Prostate gland (tissue), 2 donors: ENCODE measurements at regions of chr9 and their contacts with region 1.

Region 1: DNA sequence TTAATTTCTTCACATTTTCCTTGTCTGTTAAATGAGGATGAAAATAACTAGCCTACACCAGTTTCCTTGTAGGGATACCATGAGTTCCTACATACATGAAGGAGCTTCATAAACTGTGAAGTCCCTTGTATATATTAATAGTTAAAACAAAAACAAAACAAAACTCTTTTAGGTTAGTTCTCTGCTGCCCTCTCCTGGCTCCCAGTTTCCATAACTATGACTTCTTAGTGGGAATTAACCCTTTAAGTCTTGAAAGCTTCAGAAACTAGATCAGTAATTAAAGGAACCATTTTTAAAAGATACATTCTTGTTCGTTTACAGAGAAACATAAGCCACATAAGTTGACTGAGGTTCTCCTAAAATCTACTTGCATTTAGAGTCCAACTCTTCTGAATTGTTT is 500.0 kb upstream of the C9orf72 start:
- DNase-seq: no peak
- H3K4me3 ChIP-seq: no peak overlapping the region
- H3K27ac ChIP-seq: no peak overlapping the region
- H3K4me1 ChIP-seq: no peaks in the 10 kb centered on the region
- H3K27me3 ChIP-seq: no peaks in the 10 kb centered on the region
- CTCF ChIP-seq: peak in 2 of 4 experiments; percentile 44 to 48
- POLR2A ChIP-seq: no peak

Region 2: DNA sequence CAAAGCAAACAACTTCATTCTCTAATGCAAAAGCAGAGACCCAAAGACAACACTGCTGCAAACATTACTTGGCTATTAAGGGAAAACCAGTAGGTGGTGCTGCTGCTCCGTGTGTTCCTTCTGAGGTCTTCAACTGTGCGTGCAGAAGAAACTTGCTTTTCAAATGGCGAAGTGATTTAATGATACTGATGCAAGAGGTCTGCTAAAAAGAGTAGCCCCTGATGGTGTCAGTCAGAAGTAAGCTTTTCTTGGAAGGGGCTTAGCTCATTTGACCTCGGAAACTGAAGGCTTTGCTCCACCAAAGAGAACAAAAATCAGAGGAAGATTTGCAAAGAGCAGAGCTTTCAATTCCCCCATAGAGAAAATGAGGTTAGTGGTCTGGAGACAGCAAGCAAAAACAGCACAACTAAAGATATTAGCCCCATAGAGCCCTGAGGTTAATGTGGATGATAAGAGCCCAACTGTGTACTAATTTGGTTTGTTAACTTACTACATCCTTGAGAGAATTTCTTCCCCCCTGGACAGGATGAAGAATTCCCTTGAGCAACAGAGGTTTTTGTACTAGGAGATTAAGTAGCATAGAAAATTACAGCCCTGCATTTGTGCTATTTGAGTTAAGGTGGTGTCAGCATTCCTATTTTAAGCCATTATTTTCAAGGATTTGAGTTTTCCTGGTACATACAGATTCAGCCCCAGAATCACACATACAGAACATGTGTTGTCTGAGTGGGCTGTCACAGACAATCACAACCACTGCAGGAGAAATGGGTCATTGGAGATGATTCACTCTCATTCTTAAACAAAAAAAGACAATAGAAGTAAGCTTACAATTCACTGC is 346.8 kb before region 1 on chr9:
- intact Hi-C with region 1: loop called (anchors 5 kb)
- DNase-seq: peak; percentile 42
- H3K4me3 ChIP-seq: no peak overlapping the region
- H3K27ac ChIP-seq: no peak overlapping the region
- H3K4me1 ChIP-seq: no peaks in the 10 kb centered on the region
- H3K27me3 ChIP-seq: no peaks in the 10 kb centered on the region
- CTCF ChIP-seq: peak; percentile 19 to 67 (median 53)
- POLR2A ChIP-seq: no peak

Region 3: DNA sequence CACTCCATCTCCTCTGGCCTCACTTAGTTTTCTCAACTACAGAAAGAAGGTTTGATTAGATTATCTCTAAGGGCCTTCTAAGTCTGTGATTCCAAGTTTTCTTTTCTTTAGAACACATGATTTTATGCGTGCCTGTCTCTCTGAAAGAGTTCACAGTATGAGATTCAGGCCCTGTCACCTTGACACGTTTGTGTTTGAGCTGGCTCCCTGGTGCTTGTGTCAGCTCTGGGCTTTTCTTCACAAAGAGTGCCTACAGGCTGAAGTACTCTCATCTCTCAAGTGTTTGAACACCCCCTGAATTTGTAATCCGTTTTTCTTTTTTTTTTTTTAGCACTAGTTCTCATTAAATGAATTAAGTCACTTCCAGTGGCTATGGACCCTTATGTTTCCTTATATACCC is 193.1 kb before region 1 on chr9:
- intact Hi-C with region 1: no loop called
- DNase-seq: no peak
- H3K4me3 ChIP-seq: no peak overlapping the region
- H3K27ac ChIP-seq: no peak overlapping the region
- H3K4me1 ChIP-seq: no peaks in the 10 kb centered on the region
- H3K27me3 ChIP-seq: no peaks in the 10 kb centered on the region
- CTCF ChIP-seq: no peak
- POLR2A ChIP-seq: no peak